Aorta (tissue), 5 donors: ENCODE measurements at regions of chr2 and their contacts with region 1.

Region 1: DNA sequence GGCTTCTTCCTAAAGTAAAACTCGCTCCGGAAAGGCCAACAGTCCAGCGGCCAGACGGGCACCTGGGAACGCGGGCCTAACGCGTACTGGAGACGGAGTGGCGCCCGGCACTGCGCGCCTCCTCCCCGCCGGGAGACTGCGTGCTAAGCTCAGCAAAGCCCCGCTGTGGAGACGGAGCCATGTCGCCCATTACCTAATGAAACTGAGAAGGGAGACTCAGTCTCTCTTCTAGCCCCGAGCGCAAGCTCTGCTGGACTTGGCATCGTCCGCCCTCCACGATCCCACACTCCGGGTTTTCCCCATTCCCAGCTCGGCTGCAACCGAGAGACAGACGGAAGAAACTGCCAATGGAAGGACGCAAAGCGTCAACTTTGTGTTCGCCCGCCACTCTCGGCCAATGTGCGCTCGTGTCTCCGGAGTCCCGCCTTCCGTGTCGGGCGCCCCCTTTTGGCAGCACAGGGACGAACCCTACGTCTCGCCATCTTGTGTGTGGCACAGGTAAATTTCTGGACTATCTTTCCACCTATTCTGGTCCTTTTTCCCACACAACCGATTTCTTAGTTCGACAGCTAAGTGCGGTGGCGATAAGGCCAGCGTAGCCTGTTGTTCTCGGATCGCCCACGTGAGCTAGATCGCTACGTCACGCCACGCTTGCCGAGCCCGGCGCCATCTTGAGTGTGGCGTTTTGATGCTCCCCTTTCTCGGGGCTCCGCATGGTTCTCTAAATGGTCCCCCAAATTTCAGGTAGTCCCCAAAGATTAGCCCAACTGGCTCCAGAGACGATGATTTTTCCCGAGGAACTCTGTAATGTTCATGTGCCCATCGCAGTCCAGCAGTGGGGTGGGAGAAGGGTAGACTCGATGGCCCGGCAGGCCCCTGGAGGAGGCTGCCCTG is 1.3 kb upstream of the PTMA start:
- DNase-seq: peak; percentile 98 to 99
- ATAC-seq: peak; percentile 83
- H3K4me3 ChIP-seq: peak overlapping the region; percentile 8 to 45
- H3K27ac ChIP-seq: peak overlapping the region; percentile 88 to 95
- H3K4me1 ChIP-seq: no peaks in the 10 kb centered on the region
- H3K27me3 ChIP-seq: no peaks in the 10 kb centered on the region

Region 2: DNA sequence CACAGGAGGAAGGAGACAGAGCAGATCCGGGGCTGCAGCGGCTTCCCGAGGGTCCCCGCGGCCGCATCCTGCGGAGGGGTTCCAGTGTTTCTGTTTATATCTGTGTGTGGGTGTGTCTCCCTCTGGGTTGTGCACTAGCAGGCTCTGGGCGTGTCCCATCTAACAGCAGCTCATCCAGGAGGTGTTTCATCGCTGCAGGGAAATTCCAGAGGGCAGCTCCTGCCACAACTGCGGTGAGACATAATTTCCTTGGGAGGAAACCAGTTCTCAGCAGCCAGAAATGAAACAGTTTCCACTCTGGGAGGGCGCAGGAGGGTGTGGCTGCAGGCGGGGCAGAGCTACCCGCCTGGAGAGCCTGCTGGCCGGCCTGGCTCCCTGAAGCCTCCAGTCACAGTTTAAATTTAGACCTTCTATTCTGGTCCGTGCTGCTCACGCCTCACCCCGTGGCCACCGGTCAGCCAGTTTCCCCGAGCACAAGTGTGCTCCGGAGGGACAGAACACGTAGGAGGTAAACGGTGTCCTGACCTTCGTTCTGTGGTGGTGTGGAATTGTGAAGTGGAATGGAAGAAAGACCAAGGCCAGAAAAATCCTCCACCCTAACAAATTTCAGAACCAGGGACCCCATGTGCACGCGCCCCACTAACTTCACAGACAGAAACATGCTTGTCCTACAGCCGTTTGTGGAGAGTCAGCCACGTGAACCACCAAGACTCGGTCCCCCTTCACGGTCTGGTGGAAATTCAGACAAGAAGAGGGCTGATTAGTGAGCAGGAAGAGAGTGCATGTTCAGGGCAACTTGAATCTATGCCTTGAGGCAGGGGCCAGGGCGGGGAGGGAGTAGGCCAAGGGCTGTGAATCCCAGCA is 64.1 kb before region 1 on chr2:
- intact Hi-C with region 1: loop called (anchors 5 kb)
- DNase-seq: peak; percentile 94 to 96
- ATAC-seq: peak; percentile 94
- H3K4me3 ChIP-seq: no peak overlapping the region
- H3K27ac ChIP-seq: peak overlapping the region; percentile 97 to 99
- H3K4me1 ChIP-seq: peaks cover 0 to 3% of the 10 kb centered on the region in 2 donors
- H3K27me3 ChIP-seq: no peaks in the 10 kb centered on the region

Region 3: DNA sequence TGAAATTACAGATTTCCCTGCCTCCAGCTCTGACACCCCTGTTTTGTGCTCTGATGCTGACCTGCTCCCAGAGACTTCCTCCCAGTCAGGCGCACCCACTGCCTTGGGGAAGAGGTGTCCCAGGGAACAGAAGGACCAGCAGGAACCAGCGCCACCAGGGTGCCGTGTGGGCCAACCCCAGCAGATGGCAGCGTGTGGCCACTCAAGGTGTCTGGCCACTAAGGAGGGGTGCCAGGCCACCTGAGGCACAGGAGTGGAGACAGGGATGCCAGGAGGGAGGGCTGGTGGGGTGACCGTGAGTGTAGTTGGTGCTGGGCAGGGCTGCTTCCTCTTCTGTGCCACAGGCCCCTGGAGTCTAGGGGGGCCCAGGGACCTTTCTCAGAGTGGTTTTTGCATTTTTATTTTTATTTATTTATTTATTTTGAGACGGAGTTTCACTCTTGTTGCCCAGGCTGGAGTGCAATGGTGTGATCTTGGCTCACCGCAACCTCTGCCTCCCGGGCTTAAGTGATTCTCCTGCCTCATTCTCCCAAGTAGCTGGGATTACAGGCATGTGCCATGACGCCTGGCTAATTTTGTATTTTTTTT is 58.3 kb before region 1 on chr2:
- intact Hi-C with region 1: loop called (anchors 5 kb)
- DNase-seq: peak; percentile 77 to 92
- ATAC-seq: peak; percentile 82
- H3K4me3 ChIP-seq: no peak overlapping the region
- H3K27ac ChIP-seq: no peak overlapping the region
- H3K4me1 ChIP-seq: no peaks in the 10 kb centered on the region
- H3K27me3 ChIP-seq: no peaks in the 10 kb centered on the region

Region 4: DNA sequence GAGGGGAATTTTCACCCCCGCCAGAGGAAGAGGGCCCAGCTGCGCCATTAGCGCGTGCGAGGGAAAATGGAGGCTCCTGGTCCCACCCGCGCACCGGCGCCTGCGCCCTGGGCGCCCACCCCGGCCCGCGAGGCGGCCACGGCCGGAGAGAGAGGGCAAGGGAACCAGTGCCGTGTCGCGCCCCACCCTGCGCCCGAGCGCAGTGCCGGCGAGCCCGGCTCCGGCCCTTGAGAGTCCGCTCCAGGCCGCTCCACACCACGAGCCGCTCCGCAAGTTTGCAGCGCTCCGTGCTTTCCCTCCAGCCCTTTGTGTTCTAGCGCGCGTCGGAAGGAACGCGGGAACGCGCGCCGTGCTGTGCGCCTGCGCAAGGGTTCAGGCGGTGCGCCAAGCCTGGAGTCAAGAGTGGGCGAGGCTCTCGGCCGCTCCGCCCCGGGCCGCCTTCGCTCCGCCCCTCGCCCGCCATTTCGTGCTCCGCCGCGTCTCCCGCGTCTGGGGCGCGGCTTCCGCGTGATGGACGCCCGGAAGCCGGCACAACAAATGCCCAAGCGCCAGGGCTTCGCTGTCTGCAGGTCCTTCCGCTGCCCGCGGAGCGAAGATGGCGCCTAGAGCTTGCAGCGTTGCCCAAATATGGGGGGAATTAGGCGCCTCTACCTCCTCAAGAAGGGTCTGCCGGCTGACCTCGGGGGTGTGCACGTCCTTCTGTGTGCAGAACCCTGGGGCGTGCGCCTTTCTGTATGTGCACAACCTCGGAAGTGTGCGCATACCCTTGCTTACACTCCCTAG is 44.8 kb before region 1 on chr2:
- intact Hi-C with region 1: loop called (anchors 2 to 5 kb)
- DNase-seq: peak; percentile 97 to 99
- ATAC-seq: peak; percentile 93
- H3K4me3 ChIP-seq: peak overlapping the region in 1 of 2 donors; percentile 13
- H3K27ac ChIP-seq: peak overlapping the region; percentile 16 to 93
- H3K4me1 ChIP-seq: no peaks in the 10 kb centered on the region
- H3K27me3 ChIP-seq: no peaks in the 10 kb centered on the region

Region 5: DNA sequence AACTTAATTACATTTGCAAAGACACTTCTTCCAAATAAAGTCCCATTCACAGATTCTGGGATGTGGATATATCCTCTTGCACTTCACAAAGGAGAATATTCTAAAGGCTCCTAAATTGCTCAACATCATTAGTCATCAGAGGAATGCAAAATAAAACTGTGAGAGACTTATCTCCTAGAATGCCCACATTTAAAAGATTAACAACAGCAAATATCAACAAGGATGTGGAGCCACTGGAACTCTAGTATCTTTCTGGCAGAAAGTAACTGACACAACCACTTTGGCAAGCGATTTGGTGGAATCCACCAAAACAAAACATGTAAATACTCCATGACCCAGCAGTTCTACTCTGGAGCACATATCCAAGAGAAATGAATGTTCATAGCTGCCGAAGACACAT is 1330.1 kb after region 1 on chr2:
- intact Hi-C with region 1: no loop called
- DNase-seq: no peak
- ATAC-seq: no peak
- H3K4me3 ChIP-seq: no peak overlapping the region
- H3K27ac ChIP-seq: no peak overlapping the region
- H3K4me1 ChIP-seq: no peaks in the 10 kb centered on the region
- H3K27me3 ChIP-seq: no peaks in the 10 kb centered on the region